ENCODE measurements at regions of chrX and their contacts with region 1.

Region 1: DNA sequence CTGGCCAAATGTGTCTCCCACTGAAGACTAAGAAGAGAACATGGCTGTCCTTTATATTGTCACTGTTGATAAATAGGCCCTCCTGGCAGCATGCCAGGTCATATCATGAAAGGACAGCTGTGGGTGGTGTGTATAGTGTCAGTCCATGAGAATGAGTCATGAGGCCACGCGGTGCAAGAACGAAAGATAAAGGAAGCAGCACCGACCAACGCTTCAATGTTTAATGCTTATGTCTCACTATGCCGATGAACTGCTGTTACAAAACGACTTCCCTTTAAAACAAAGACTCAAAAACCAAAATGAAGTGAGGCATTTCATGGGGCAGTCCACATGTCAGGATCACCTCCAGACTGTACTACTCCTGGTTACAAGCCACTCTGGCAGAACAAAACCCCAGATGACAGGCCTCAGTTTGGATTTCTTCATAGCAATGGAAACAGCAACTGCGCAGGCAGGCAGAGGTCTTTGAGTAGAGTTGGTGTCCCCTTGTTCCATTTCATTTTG is 5.2 kb upstream of the TCEANC start:
- DNase-seq: peak; percentile 69
- H3K4me3 Mint-ChIP-seq: peak overlapping the region; percentile 26
- H3K27ac Mint-ChIP-seq: peak overlapping the region; percentile 88
- H3K4me1 Mint-ChIP-seq: peaks cover 14% of the 10 kb centered on the region
- H3K27me3 Mint-ChIP-seq: no peaks in the 10 kb centered on the region

Region 2: DNA sequence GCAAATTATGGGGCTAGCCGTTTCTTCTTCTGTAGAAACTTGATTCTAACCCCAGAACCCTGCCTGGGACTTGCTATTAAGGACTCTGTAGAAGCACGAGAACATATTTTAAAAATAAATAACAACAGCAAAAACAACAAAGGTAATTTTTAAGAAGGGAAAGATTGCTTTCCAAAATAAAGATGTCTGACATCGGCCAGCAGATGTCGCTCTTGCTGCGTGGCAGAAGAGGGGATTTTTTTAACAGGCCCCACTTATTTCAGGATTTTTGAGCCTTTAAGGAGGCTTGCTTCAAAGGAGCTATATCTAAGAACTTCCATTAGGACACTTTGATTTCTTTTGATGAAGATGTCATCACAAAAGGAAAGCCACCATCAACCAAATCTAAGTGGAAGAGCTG is 141.2 kb before region 1 on chrX:
- intact Hi-C with region 1: loop called (anchors 1 kb)
- DNase-seq: peak; percentile 81
- H3K4me3 Mint-ChIP-seq: no peak overlapping the region
- H3K27ac Mint-ChIP-seq: no peak overlapping the region
- H3K4me1 Mint-ChIP-seq: peaks cover 4% of the 10 kb centered on the region
- H3K27me3 Mint-ChIP-seq: no peaks in the 10 kb centered on the region